MCF 10A (cell line): ENCODE measurements at regions of chr22 and their contacts with region 1.

Region 1: DNA sequence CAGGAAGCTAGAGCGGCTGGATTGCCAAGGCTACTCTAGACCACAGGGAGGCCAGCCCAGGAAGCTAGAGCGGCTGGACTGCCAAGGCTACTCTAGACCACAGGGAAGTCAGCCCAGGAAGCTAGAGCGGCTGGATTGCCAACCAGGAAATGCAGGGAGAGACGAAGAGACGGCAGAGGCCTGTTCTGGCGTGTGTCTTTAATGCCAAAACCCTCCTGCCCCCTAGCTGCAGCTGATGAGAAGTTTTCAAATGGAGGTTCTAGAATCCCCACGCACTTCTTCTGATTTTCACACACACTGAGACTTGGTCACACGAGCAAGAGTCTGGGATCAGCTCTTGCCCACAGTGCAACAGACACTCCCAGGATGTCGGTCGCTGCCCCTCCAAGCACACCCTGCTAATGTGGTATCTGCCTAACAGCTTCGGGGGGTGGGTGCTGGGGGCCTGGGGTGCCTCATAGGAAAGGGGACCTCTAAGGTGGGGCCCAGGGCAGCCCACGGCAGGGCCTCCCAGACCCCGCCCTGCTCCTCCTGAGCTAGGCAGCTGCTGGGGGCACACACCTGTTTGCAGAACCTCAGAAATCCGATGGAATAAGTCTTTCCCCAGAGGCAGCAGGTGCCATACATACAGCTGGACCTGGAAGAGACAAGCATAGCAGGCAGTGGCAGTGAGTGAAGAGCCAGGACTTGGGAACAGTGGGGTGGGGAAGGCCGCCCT is 28.5 kb downstream of the MAFF start:
- DNase-seq: peak; percentile 85
- H3K4me3 Mint-ChIP-seq: no peak overlapping the region
- H3K27ac Mint-ChIP-seq: peak overlapping the region; percentile 83
- H3K4me1 Mint-ChIP-seq: peaks cover 24% of the 10 kb centered on the region
- H3K27me3 Mint-ChIP-seq: no peaks in the 10 kb centered on the region
- CTCF ChIP-seq: peak; percentile 53

Region 2: GRCh38 chr22:38051900-38052862 is 178.1 kb before region 1 on chr22:
- CTCF ChIA-PET with region 1: interaction called, 22 read pairs
- POLR2A ChIA-PET with region 1: interaction called, 9 read pairs
- intact Hi-C with region 1: loop called (anchors 5 kb)
- DNase-seq: peak; percentile 83
- H3K4me3 Mint-ChIP-seq: no peak overlapping the region
- H3K27ac Mint-ChIP-seq: no peak overlapping the region
- H3K4me1 Mint-ChIP-seq: peaks cover 5% of the 10 kb centered on the region
- H3K27me3 Mint-ChIP-seq: no peaks in the 10 kb centered on the region
- CTCF ChIP-seq: peak; percentile 93

Region 3: DNA sequence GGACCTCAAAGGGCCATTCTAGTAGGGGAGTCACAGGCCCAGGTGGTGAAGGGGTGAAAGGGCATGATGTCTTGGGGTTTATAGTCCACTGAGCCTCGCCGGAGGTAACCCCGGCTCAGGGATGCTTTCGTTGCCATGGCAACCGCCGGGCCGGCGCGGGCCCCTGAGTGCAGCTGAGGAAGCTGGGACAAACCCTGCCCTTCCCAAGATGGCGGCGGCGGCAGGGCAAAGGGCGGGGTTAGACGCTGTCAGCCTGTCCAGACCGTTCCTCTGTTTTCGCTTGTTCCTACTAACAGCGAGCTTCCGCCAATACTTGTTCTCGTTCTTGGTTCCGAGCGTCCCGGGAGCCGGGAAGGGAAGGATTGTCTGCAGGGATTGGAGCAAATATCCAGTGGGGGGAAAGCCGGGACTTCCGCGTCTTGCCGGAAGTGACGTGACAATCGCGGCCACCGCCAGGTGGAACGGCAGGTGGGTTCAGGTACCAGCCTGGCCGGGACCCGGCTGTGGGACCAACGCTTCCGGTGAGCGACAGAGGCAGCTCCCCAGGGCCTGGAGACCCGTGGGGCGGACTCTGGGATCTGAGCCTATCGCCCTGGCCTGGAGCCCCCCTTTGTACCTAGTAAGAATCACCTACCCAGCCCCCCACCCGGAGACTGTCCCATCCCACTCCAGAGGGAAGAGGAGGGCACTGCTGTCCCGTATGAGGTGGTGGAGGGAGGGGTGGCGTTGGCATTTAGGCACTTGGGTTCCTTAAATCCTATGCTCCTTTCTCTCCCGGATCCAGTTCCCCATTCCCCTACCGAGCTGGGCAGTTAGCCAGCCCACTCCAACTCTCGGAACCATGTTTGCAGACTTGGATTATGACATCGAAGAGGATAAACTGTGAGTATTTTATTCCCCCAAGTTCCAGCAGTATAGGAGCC is 173.0 kb before region 1 on chr22 and contains the start of gene PICK1:
- CTCF ChIA-PET with region 1: interaction called, 22 read pairs
- POLR2A ChIA-PET with region 1: interaction called, 9 read pairs
- intact Hi-C with region 1: loop called (anchors 5 kb)
- DNase-seq: peak; percentile 90
- H3K4me3 Mint-ChIP-seq: peak within 1 kb of the TSS; percentile 84
- H3K27ac Mint-ChIP-seq: peak within 1 kb of the TSS; percentile 97
- H3K4me1 Mint-ChIP-seq: peaks cover 13% of the 10 kb centered on the region
- H3K27me3 Mint-ChIP-seq: no peaks in the 10 kb centered on the region
- CTCF ChIP-seq: no peak
- total RNA-seq, gene PICK1: 40.2 and 40.6 TPM in 2 replicates

Region 4: GRCh38 chr22:38104084-38104483 is 126.2 kb before region 1 on chr22:
- CTCF ChIA-PET with region 1: interaction called, 3 read pairs
- POLR2A ChIA-PET with region 1: no interaction called
- intact Hi-C with region 1: loop called (anchors 1 kb)
- DNase-seq: peak; percentile 27
- H3K4me3 Mint-ChIP-seq: no peak overlapping the region
- H3K27ac Mint-ChIP-seq: no peak overlapping the region
- H3K4me1 Mint-ChIP-seq: no peaks in the 10 kb centered on the region
- H3K27me3 Mint-ChIP-seq: no peaks in the 10 kb centered on the region
- CTCF ChIP-seq: peak; percentile 16

Region 5: DNA sequence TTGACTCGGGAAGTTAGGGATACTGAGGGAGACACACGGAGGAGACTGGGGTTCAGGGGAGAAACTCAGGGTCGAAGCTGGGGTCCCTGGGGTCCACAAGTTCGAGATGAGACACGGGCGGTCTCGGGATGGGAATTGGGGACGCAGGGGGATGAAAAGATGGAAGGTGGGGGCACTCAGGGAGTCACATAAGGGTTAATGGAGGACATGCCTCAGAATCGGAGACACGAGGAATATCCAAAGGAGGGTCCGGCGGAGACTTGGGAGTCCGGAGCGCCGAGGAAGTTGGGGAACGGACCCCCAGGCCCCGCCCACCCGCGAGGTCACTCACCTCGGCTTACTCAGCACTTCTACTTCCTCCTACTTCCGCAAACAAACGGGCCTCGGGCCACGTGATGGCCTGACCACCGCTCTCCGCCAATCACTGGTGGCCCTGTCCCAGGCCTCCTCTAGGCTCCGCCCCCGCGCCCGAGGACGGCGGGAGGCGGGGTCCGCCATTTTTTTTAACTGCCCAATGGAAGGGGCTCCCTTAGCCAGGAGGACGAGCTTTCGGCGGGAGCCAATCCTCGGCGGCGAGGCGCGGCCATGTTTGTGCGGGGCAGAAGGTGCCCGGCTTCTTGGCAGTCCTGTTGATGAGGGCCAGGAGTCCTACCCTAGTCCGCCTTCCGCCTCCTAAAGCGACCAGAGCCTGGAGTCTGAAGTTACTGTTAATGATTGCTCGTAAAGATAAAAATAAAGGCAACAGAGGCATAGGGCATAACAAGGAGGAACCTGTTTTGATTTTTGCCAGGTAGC is 48.6 kb before region 1 on chr22 and contains the start of gene PLA2G6:
- CTCF ChIA-PET with region 1: interaction called, 6 read pairs
- POLR2A ChIA-PET with region 1: interaction called, 29 read pairs
- intact Hi-C with region 1: loop called (anchors 5 kb)
- DNase-seq: peak; percentile 99
- H3K4me3 Mint-ChIP-seq: peak within 1 kb of the TSS; percentile 97
- H3K27ac Mint-ChIP-seq: peak within 1 kb of the TSS; percentile 99
- H3K4me1 Mint-ChIP-seq: peaks cover 34% of the 10 kb centered on the region
- H3K27me3 Mint-ChIP-seq: no peaks in the 10 kb centered on the region
- CTCF ChIP-seq: no peak
- total RNA-seq, gene PLA2G6: 37.5 and 40.3 TPM in 2 replicates

Region 6: DNA sequence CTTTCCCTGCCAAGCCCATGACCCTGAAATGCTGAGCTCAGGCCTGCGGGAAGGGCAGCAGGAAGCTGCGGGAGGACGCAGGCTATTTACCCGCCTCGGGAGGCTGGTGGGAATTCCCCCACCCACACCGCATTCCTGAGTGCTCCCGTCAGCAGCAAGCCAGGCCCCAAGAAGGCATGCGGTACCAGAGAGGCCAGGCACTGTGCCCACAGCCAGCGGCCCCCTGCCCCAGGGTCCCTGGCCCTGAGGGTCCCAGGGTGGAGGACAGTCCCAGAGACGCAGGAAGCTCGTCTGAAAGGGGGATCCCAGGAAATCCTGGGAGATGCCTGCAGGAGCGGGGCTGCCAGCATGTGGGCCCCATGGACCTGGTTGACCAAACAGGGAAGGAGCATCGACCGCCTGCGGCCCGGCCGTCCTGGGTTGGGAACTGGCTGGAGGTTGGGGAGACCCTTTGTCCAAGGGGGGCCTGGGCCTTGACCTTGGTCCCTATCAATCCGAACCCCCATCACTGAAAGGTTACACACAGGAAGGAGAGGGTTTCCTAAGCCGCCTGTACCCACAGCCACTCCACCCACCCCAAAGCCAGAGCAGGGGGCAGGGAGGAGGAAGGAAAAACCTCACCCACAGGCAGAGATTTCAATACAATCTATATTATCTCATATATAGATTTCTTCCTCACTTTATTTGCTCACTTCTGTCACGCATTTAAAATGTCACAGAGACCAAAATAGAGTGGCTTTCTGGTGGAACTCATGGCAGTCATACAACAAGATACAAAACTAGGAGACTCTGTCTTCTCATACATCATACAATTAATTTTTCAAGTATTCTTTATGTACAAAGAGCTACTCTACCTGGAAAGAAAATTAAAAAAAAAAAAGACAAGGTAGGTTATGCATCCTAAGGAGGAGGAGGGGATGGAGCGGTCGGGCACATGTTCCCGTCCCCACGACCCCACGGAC is 11.3 kb before region 1 on chr22:
- CTCF ChIA-PET with region 1: interaction called, 3 read pairs
- POLR2A ChIA-PET with region 1: interaction called, 47 read pairs
- intact Hi-C with region 1: no loop called
- DNase-seq: peak; percentile 93
- H3K4me3 Mint-ChIP-seq: peak overlapping the region; percentile 26
- H3K27ac Mint-ChIP-seq: peak overlapping the region; percentile 97
- H3K4me1 Mint-ChIP-seq: peaks cover 48% of the 10 kb centered on the region
- H3K27me3 Mint-ChIP-seq: no peaks in the 10 kb centered on the region
- CTCF ChIP-seq: no peak

Region 7: DNA sequence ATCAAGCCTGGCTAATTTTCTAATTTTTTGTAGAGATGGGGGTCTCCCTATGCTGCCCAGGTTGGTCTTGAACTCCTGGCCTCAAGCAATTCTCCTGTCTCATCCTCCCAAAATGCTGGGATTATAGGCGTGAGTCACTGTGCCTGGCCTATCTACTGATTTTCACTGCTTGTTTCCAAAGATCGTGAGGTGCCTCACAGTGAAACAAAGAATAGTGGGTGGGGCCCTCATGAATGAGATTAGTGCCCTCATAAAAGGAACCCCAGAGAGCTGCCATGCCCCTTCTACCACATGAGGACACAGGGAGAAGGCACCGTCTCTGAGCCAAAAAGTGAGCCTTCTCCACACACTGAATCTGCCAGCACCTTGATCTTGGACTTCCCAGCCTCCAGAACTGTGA is 19.0 kb after region 1 on chr22:
- CTCF ChIA-PET with region 1: no interaction called
- POLR2A ChIA-PET with region 1: no interaction called
- intact Hi-C with region 1: no loop called
- DNase-seq: no peak
- H3K4me3 Mint-ChIP-seq: no peak overlapping the region
- H3K27ac Mint-ChIP-seq: no peak overlapping the region
- H3K4me1 Mint-ChIP-seq: no peaks in the 10 kb centered on the region
- H3K27me3 Mint-ChIP-seq: no peaks in the 10 kb centered on the region
- CTCF ChIP-seq: no peak

Region 8: GRCh38 chr22:38305471-38306448 is 75.5 kb after region 1 on chr22:
- CTCF ChIA-PET with region 1: no interaction called
- POLR2A ChIA-PET with region 1: no interaction called
- intact Hi-C with region 1: no loop called
- DNase-seq: peak; percentile 53
- H3K4me3 Mint-ChIP-seq: peak overlapping the region; percentile 38
- H3K27ac Mint-ChIP-seq: peak overlapping the region; percentile 98
- H3K4me1 Mint-ChIP-seq: peaks cover 64% of the 10 kb centered on the region
- H3K27me3 Mint-ChIP-seq: no peaks in the 10 kb centered on the region
- CTCF ChIP-seq: no peak